PC-3 (cell line): ENCODE measurements at regions of chr4 and their contacts with region 1.

Region 1: DNA sequence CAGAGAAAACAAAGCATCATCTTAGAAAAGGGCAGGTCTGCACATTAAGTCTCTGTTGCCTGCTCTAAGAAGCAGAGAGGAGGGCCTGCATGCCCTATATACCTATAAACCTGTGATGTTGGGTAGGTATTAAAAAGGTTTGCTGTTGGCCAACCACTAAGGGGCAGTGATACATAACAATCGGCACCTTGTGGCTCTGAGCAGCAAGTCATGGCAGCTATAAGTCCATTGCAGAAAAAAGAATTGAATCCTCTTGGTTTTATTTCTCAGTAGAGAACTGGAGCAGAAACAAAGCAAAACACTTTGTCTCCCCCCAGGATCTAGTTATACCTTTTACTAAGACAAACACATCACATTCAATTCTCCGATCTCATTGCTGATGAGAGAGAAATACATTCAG is 1364.4 kb downstream of the STIM2 start:
- DNase-seq: peak; percentile 62
- ATAC-seq: peak; percentile 81
- H3K4me3 ChIP-seq: no peak overlapping the region
- H3K27ac ChIP-seq: no peak overlapping the region
- H3K4me1 ChIP-seq: peaks cover 26% of the 10 kb centered on the region
- H3K27me3 ChIP-seq: no peaks in the 10 kb centered on the region
- CTCF ChIP-seq: peak; percentile 68

Region 2: GRCh38 chr4:26780539-26780938 is 1444.5 kb before region 1 on chr4:
- CTCF ChIA-PET with region 1: no interaction called
- POLR2A ChIA-PET with region 1: no interaction called
- intact Hi-C with region 1: no loop called
- DNase-seq: peak; percentile 83
- ATAC-seq: peak; percentile 84
- H3K4me3 ChIP-seq: no peak overlapping the region
- H3K27ac ChIP-seq: peak overlapping the region; percentile 82
- H3K4me1 ChIP-seq: peaks cover 47% of the 10 kb centered on the region
- H3K27me3 ChIP-seq: no peaks in the 10 kb centered on the region
- CTCF ChIP-seq: no peak

Region 3: DNA sequence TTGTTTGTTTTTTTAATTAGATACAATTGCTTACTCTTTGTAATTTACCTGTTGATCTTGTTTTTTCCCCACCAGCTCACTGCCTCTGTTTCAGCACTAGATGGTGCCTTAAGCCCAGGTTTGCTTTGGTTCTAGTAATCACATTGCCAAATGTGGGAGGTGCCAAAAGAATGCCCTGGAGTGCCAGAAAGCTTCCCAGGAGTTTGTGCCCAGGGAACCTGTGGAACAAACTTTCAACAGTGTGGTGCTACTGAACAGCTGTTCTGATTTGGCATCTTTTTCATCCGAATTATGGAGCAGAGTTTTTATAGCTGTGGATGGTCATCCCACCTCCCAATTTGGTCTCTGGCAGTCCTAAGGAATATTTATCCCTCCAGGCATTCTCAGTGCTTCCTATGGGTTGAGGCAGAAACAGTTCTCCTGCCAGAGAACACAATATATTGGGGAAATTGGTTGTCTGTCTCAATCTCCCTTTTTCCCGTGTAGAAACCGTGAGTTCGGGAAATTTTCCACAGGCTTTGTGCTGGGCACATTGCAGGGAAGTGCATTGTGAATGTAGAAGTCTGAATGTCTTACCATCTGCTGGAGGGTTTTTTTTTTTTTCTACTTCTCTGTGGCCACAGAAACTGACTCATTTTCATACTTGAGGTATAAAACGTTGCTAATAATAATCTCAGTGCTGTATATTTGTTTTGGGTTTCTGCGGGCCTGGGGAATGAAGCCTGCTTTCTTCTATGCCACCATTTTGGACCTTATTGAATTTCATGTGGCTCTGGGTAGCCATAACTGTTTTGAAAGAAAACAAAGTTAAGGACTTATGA is 363.5 kb before region 1 on chr4:
- CTCF ChIA-PET with region 1: no interaction called
- POLR2A ChIA-PET with region 1: no interaction called
- intact Hi-C with region 1: loop called (anchors 2 kb)
- DNase-seq: peak; percentile 79
- ATAC-seq: peak; percentile 72
- H3K4me3 ChIP-seq: no peak overlapping the region
- H3K27ac ChIP-seq: peak overlapping the region; percentile 44
- H3K4me1 ChIP-seq: peaks cover 8% of the 10 kb centered on the region; the same call in 1 of the 2 replicates
- H3K27me3 ChIP-seq: no peaks in the 10 kb centered on the region
- CTCF ChIP-seq: peak; percentile 84

Region 4: GRCh38 chr4:28176939-28177338 is 48.1 kb before region 1 on chr4:
- CTCF ChIA-PET with region 1: no interaction called
- POLR2A ChIA-PET with region 1: no interaction called
- intact Hi-C with region 1: no loop called
- DNase-seq: no peak
- ATAC-seq: no peak
- H3K4me3 ChIP-seq: no peak overlapping the region
- H3K27ac ChIP-seq: no peak overlapping the region
- H3K4me1 ChIP-seq: 0 out of 2 replicates have a peak, but pooled peaks cover 6% of the 10 kb centered on the region
- H3K27me3 ChIP-seq: no peaks in the 10 kb centered on the region
- CTCF ChIP-seq: no peak

Region 5: GRCh38 chr4:28388455-28388854 is 163.4 kb after region 1 on chr4:
- CTCF ChIA-PET with region 1: no interaction called
- POLR2A ChIA-PET with region 1: no interaction called
- intact Hi-C with region 1: no loop called
- DNase-seq: no peak
- ATAC-seq: no peak
- H3K4me3 ChIP-seq: no peak overlapping the region
- H3K27ac ChIP-seq: no peak overlapping the region
- H3K4me1 ChIP-seq: no peaks in the 10 kb centered on the region
- H3K27me3 ChIP-seq: no peaks in the 10 kb centered on the region
- CTCF ChIP-seq: no peak

Region 6: GRCh38 chr4:28435314-28435713 is 210.3 kb after region 1 on chr4:
- CTCF ChIA-PET with region 1: no interaction called
- POLR2A ChIA-PET with region 1: no interaction called
- intact Hi-C with region 1: loop called (anchors 10 kb)
- DNase-seq: peak; percentile 24
- ATAC-seq: peak; percentile 42
- H3K4me3 ChIP-seq: peak overlapping the region; percentile 28; the same call in 1 of the 2 replicates
- H3K27ac ChIP-seq: peak overlapping the region; percentile 76
- H3K4me1 ChIP-seq: peaks cover 35% of the 10 kb centered on the region
- H3K27me3 ChIP-seq: no peaks in the 10 kb centered on the region
- CTCF ChIP-seq: no peak

Region 7: GRCh38 chr4:28536124-28536523 is 311.1 kb after region 1 on chr4:
- CTCF ChIA-PET with region 1: no interaction called
- POLR2A ChIA-PET with region 1: no interaction called
- intact Hi-C with region 1: no loop called
- DNase-seq: no peak
- ATAC-seq: no peak
- H3K4me3 ChIP-seq: no peak overlapping the region
- H3K27ac ChIP-seq: no peak overlapping the region
- H3K4me1 ChIP-seq: no peaks in the 10 kb centered on the region
- H3K27me3 ChIP-seq: no peaks in the 10 kb centered on the region
- CTCF ChIP-seq: no peak

Region 8: DNA sequence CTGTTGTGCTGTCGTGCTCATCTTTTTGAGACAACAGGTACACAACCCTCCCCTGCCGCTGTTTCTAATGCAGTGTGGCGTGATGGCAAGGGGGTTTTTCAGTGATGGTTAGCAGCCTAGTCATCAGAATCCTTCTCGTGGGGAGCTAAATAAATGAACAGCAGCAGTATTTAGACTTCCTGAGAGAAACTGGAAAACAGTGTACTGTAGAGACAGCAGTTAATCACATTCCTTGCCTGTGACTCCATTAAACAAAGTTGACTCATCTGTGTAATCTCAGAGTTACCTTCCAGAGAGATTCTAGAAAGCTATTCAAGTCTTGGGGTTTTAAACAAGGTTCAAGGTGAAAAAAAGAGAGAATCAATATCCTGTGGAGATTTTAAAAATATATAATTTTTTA is 741.9 kb after region 1 on chr4:
- CTCF ChIA-PET with region 1: no interaction called
- POLR2A ChIA-PET with region 1: no interaction called
- intact Hi-C with region 1: loop called (anchors 5 kb)
- DNase-seq: peak; percentile 69
- ATAC-seq: peak; percentile 99
- H3K4me3 ChIP-seq: peak overlapping the region; percentile 42; the same call in 1 of the 2 replicates
- H3K27ac ChIP-seq: peak overlapping the region; percentile 54
- H3K4me1 ChIP-seq: peaks cover 12% of the 10 kb centered on the region
- H3K27me3 ChIP-seq: no peaks in the 10 kb centered on the region
- CTCF ChIP-seq: no peak